Activated T-helper 2 cell treated with anti-CD3 and anti-CD28 coated beads, Interferon-gamma antibody, Interleukin-2, Interleukin-4, amounts not matched to agents 10 μg/mL and 5 μg/mL and 100 μg/mL, durations not matched to agents 14 hours and 24 hours and 36 hours (primary cell): ENCODE measurements at regions of chr5 and their contacts with region 1.

Region 1: GRCh38 chr5:138900281-138900965 is 25.3 kb upstream of the LRRTM2 start:
- DNase-seq: no peak
- H3K4me3 Mint-ChIP-seq: no peak overlapping the region
- H3K27ac Mint-ChIP-seq: no peak overlapping the region
- H3K4me1 Mint-ChIP-seq: peaks cover 29% of the 10 kb centered on the region
- H3K27me3 Mint-ChIP-seq: peaks cover 19% of the 10 kb centered on the region

Region 2: GRCh38 chr5:138641547-138642298 is 258.7 kb before region 1 on chr5:
- intact Hi-C with region 1: loop called (anchors 1 kb)
- DNase-seq: peak; percentile 61
- H3K4me3 Mint-ChIP-seq: no peak overlapping the region
- H3K27ac Mint-ChIP-seq: no peak overlapping the region
- H3K4me1 Mint-ChIP-seq: no peaks in the 10 kb centered on the region
- H3K27me3 Mint-ChIP-seq: peaks cover 69% of the 10 kb centered on the region